ENCODE measurements at regions of chr5 and their contacts with region 1.

Region 1: GRCh38 chr5:82278095-82278918 is at the start of gene RPS23:
- DNase-seq: peak; percentile 84
- ATAC-seq: peak; percentile 86
- H3K4me3 ChIP-seq: peak within 1 kb of the TSS; percentile 93 to 94
- H3K27ac ChIP-seq: peak within 1 kb of the TSS; percentile 74
- H3K4me1 ChIP-seq: peaks cover 4 to 23% of the 10 kb centered on the region in 2 experiments; a peak in 3 of 4 replicates
- H3K27me3 ChIP-seq: no peaks in the 10 kb centered on the region
- CTCF ChIP-seq: no peak
- POLR2A ChIP-seq: peak; percentile 91
- RAD21 ChIP-seq: no peak
- total RNA-seq, gene RPS23: 2,206 TPM

Region 2: GRCh38 chr5:82364497-82364896 is 86.2 kb after region 1 on chr5:
- CTCF ChIA-PET with region 1: no interaction called
- POLR2A ChIA-PET with region 1: interaction called, 13 read pairs
- RAD21 ChIA-PET with region 1: no interaction called
- intact Hi-C with region 1: no loop called
- DNase-seq: no peak
- ATAC-seq: peak; percentile 45; the same call in 1 of the 2 replicates
- H3K4me3 ChIP-seq: no peak overlapping the region
- H3K27ac ChIP-seq: no peak overlapping the region
- H3K4me1 ChIP-seq: peaks cover 15 to 74% of the 10 kb centered on the region in 2 experiments
- H3K27me3 ChIP-seq: no peaks in the 10 kb centered on the region
- CTCF ChIP-seq: peak; percentile 18 to 54 (median 38); a peak in 4 of 6 replicates
- POLR2A ChIP-seq: no peak
- RAD21 ChIP-seq: peak; percentile 84